ENCODE measurements at regions of chr7 and their contacts with region 1.

Region 1: GRCh38 chr7:150514748-150515222 is at the start of gene GIMAP7:
- DNase-seq: peak; percentile 83
- H3K4me3 Mint-ChIP-seq: peak within 1 kb of the TSS; percentile 98
- H3K27ac Mint-ChIP-seq: peak within 1 kb of the TSS; percentile 99
- H3K4me1 Mint-ChIP-seq: peaks cover 48% of the 10 kb centered on the region
- H3K27me3 Mint-ChIP-seq: no peaks in the 10 kb centered on the region

Region 2: DNA sequence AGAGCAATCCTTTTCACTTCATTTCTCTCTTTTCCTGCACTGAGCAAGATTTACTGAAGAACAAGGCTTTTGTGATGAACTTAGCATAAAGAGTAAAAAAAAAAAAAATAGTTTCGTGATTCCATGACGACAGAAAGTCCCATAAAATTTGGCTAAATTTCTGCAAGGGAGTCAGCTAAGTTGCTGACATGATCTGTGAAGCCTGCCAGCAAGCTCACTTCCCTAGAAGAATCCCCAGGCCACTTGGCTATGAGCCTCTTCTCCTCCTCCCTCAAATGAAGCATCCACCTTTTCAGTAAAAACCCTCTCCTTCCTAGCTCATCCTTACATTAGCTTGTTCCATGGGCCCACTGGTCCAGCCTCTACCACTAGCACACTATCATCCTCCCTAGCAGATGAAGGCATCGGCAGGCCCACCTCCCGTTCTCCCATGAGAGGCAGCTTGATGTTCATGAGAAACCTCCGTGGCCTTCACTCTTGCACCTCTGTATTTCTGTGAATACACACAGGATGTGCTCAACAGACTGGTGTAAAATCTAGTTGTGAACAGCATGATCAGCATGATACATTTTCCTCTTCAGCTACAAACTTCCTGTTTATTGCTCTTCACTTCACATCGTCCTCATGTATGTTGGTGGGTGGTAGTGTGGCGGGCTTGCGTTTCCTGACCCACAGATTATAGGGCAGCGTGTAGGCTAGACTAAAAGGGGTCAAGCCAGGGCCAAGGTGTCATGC is 33.4 kb before region 1 on chr7:
- CTCF ChIA-PET with region 1: interaction called, 10 read pairs
- DNase-seq: peak; percentile 77
- H3K4me3 Mint-ChIP-seq: peak overlapping the region; percentile 79
- H3K27ac Mint-ChIP-seq: peak overlapping the region; percentile 99
- H3K4me1 Mint-ChIP-seq: peaks cover 98% of the 10 kb centered on the region
- H3K27me3 Mint-ChIP-seq: no peaks in the 10 kb centered on the region

Region 3: GRCh38 chr7:150502519-150502918 is 12.3 kb before region 1 on chr7:
- CTCF ChIA-PET with region 1: interaction called, 16 read pairs
- DNase-seq: peak; percentile 71
- H3K4me3 Mint-ChIP-seq: peak overlapping the region; percentile 25
- H3K27ac Mint-ChIP-seq: peak overlapping the region; percentile 94
- H3K4me1 Mint-ChIP-seq: peaks cover 89% of the 10 kb centered on the region
- H3K27me3 Mint-ChIP-seq: no peaks in the 10 kb centered on the region

Region 4: GRCh38 chr7:151251973-151252835 is 737.4 kb after region 1 on chr7:
- CTCF ChIA-PET with region 1: no interaction called
- DNase-seq: no peak
- H3K4me3 Mint-ChIP-seq: no peak overlapping the region
- H3K27ac Mint-ChIP-seq: no peak overlapping the region
- H3K4me1 Mint-ChIP-seq: peaks cover 20% of the 10 kb centered on the region
- H3K27me3 Mint-ChIP-seq: peaks cover 97% of the 10 kb centered on the region